ENCODE measurements at regions of chr3 and their contacts with region 1.

Region 1: GRCh38 chr3:35849496-35849895 is 210.2 kb downstream of the ARPP21 start:
- DNase-seq: no peak
- ATAC-seq: no peak
- H3K4me3 ChIP-seq: no peak overlapping the region
- H3K27ac ChIP-seq: no peak overlapping the region
- H3K4me1 ChIP-seq: no peaks in the 10 kb centered on the region
- H3K27me3 ChIP-seq: no peaks in the 10 kb centered on the region
- CTCF ChIP-seq: no peak
- EP300 ChIP-seq: no peak
- POLR2A ChIP-seq: no peak
- RAD21 ChIP-seq: no peak

Region 2: DNA sequence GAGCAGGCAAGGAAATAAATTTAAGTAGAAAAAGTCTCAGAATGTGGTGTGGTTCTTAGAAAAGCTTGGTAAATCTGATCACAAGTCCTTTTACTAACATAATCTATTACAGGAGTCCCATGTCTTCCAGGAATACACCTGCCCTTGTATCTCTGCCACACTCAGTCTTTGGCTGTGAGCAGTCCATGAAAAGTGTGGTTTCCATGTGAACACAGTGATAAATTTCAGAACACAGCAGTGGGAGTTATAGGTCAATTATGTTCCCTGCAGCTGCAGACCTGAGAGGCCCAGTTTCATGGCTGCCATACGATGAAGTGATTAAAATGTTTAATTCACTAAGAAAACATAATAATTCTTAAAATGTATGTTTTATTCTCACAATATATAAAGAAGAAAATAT is 163.9 kb after region 1 on chr3:
- CTCF ChIA-PET with region 1: no interaction called
- POLR2A ChIA-PET with region 1: no interaction called
- RAD21 ChIA-PET with region 1: no interaction called
- SMC1A ChIA-PET with region 1: no interaction called
- in situ Hi-C with region 1: no loop called
- intact Hi-C with region 1: loop called (anchors 5 kb)
- DNase-seq: no peak
- ATAC-seq: no peak
- H3K4me3 ChIP-seq: no peak overlapping the region
- H3K27ac ChIP-seq: no peak overlapping the region
- H3K4me1 ChIP-seq: no peaks in the 10 kb centered on the region
- H3K27me3 ChIP-seq: no peaks in the 10 kb centered on the region
- CTCF ChIP-seq: no peak
- EP300 ChIP-seq: no peak
- POLR2A ChIP-seq: no peak
- RAD21 ChIP-seq: no peak